ENCODE measurements at regions of chr19 and their contacts with region 1.

Region 1: GRCh38 chr19:48333467-48334384 is 8.4 kb downstream of the EMP3 start:
- DNase-seq: peak; percentile 51

Region 2: GRCh38 chr19:48255376-48256303 is 78.1 kb before region 1 on chr19 and contains the start of gene CARD8:
- in situ Hi-C with region 1: loop called (anchors 10 kb)
- DNase-seq: peak; percentile 94
- total RNA-seq, gene CARD8: 25.9 and 36.0 TPM in 2 replicates

Region 3: GRCh38 chr19:48461982-48462655 is 128.4 kb after region 1 on chr19:
- in situ Hi-C with region 1: no loop called
- DNase-seq: no peak

Region 4: GRCh38 chr19:48489608-48490216 is 156.0 kb after region 1 on chr19:
- in situ Hi-C with region 1: no loop called
- DNase-seq: peak; percentile 71

Measured in G401 (cell line).